MCF 10A (cell line): ENCODE measurements at regions of chr11 and their contacts with region 1.

Region 1: DNA sequence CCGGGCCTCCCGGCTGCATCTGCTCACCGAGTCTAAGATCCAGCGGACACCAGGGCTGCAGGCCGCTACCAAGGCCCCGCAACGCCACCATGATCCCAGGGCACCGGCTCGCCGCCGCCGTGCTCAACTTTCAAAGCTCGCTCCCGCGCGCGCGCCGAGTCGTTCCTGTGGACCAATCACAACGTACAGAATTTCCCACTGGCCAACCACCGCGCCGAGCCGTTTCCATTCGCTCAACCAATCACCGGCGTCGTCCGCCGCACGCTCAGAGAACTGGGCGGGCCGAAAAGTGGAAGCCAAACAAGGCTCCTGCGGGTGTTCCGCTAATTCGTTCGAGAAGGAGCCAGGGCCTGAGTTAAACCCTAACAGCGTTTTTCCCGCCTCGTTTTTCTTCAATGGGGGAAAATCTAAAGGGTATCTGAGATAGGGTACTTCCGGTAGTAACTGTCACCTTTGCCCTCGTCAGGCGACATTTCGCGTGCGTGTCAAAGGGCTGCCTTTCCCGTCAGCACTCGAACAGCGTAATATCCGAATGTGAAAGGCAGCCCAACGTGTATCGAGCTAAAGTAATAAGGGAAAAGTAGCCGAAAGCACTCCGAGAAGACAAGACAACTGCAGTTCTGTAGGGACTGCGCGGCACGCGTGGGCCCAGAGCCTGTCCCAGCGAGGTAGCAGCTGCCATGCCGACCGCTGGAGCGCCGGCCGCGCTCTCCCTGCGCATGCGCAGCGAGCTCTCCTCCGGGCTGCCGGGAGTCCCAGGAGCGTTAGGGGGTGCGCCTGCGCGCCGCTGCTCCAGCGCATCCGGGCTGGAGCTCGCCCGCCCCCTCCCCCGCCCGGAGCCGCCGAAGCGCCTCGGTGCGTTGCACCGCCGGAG is at the starts of genes NCAPD3 and VPS26B:
- DNase-seq: peak; percentile 97
- H3K4me3 Mint-ChIP-seq: peak within 1 kb of the TSS; percentile 93
- H3K27ac Mint-ChIP-seq: peak within 1 kb of the TSS; percentile 93
- H3K4me1 Mint-ChIP-seq: peaks cover 41% of the 10 kb centered on the region
- H3K27me3 Mint-ChIP-seq: no peaks in the 10 kb centered on the region
- CTCF ChIP-seq: no peak
- total RNA-seq, gene NCAPD3: 19.3 and 26.7 TPM in 2 replicates
- total RNA-seq, gene VPS26B: 45.2 and 47.9 TPM in 2 replicates

Region 2: GRCh38 chr11:134196756-134197155 is 27.3 kb before region 1 on chr11:
- CTCF ChIA-PET with region 1: no interaction called
- POLR2A ChIA-PET with region 1: no interaction called
- intact Hi-C with region 1: no loop called
- DNase-seq: no peak
- H3K4me3 Mint-ChIP-seq: no peak overlapping the region
- H3K27ac Mint-ChIP-seq: no peak overlapping the region
- H3K4me1 Mint-ChIP-seq: no peaks in the 10 kb centered on the region
- H3K27me3 Mint-ChIP-seq: no peaks in the 10 kb centered on the region
- CTCF ChIP-seq: no peak

Region 3: GRCh38 chr11:134244655-134245054 is 20.6 kb after region 1 on chr11:
- CTCF ChIA-PET with region 1: interaction called, 11 read pairs
- POLR2A ChIA-PET with region 1: interaction called, 11 read pairs
- intact Hi-C with region 1: no loop called
- DNase-seq: peak; percentile 18
- H3K4me3 Mint-ChIP-seq: no peak overlapping the region
- H3K27ac Mint-ChIP-seq: no peak overlapping the region
- H3K4me1 Mint-ChIP-seq: no peaks in the 10 kb centered on the region
- H3K27me3 Mint-ChIP-seq: no peaks in the 10 kb centered on the region
- CTCF ChIP-seq: peak; percentile 36

Region 4: DNA sequence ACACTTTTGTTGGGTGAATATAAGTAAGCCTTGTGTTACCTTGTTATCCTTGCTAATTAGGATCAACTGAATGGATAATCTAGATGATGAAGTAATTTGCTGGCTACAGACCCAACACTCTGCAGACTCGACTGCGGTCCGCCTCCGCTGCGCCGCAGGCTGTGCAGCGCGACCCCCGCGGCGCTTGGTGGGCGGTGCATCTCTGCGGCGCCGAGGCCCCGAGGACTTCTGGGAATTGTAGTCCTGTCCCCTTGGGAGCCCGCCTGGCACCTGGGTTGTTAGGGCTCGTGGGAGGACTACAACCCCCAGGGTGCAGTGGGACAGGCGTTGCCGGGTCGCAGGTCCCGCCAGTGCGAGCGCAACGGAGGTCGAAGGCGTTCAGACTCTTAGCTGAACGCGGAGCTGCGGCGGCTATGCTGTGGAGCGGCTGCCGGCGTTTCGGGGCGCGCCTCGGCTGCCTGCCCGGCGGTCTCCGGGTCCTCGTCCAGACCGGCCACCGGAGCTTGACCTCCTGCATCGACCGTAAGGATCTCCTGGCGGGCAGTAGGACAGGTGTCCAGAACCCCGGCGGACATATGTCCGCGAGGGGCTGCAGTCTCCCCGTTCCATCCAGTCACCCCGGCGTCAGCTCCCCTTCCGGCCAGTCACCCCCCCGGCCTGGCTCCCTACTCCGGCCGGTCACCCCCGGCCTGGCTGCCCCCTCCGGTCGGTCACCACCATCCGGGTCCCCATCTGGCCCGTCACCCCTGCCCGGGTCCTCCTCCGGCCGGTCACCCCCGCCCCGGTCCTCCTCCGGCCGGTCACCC is 29.3 kb after region 1 on chr11 and contains the starts of genes ACAD8 and THYN1:
- CTCF ChIA-PET with region 1: interaction called, 3 read pairs
- POLR2A ChIA-PET with region 1: interaction called, 52 read pairs
- intact Hi-C with region 1: loop called (anchors 2 kb)
- DNase-seq: peak; percentile 97
- H3K4me3 Mint-ChIP-seq: peak within 1 kb of the TSS; percentile 90
- H3K27ac Mint-ChIP-seq: peak within 1 kb of the TSS; percentile 83
- H3K4me1 Mint-ChIP-seq: peaks cover 22% of the 10 kb centered on the region
- H3K27me3 Mint-ChIP-seq: no peaks in the 10 kb centered on the region
- CTCF ChIP-seq: no peak
- total RNA-seq, gene ACAD8: 18.9 and 20.1 TPM in 2 replicates
- total RNA-seq, gene THYN1: 33.4 and 34.8 TPM in 2 replicates